Activated CD8-positive, alpha-beta memory T cell treated with anti-CD3 and anti-CD28 coated beads, Interleukin-2, amount 10 ng/mL, durations not matched to agents 7 days and 5 days (primary cell): ENCODE measurements at regions of chr6 and their contacts with region 1.

Region 1: GRCh38 chr6:138007014-138007472 is 100.2 kb downstream of the PERP start:
- DNase-seq: no peak
- ATAC-seq: peak; percentile 20
- H3K4me3 Mint-ChIP-seq: no peak overlapping the region
- H3K27ac Mint-ChIP-seq: no peak overlapping the region
- H3K4me1 Mint-ChIP-seq: peaks cover 7% of the 10 kb centered on the region
- H3K27me3 Mint-ChIP-seq: peaks cover 3% of the 10 kb centered on the region

Region 2: DNA sequence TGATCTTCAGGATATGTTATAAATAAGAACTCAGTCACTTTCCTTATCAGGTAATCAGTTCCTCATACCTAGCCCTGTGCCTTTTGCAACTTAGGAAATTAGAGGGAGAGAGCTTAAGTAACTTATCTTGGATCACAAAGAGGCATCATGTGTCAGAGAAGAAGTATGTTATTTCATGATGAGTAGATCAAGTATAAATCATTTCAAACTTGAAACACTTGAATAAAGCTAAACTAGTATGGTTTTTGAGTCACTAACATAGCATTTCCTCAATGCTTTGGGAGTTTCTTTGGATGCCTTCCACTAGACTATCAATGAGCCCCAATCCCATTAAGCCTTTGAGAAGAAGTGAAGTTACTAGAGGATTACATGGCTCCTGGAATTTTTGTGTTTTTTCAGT is 242.6 kb before region 1 on chr6:
- CTCF ChIA-PET with region 1: no interaction called
- DNase-seq: no peak
- ATAC-seq: no peak
- H3K4me3 Mint-ChIP-seq: no peak overlapping the region
- H3K27ac Mint-ChIP-seq: no peak overlapping the region
- H3K4me1 Mint-ChIP-seq: peaks cover 15% of the 10 kb centered on the region
- H3K27me3 Mint-ChIP-seq: no peaks in the 10 kb centered on the region

Region 3: GRCh38 chr6:137927777-137928218 is 79.2 kb before region 1 on chr6:
- CTCF ChIA-PET with region 1: no interaction called
- DNase-seq: peak; percentile 92
- ATAC-seq: peak; percentile 99
- H3K4me3 Mint-ChIP-seq: peak overlapping the region; percentile 55
- H3K27ac Mint-ChIP-seq: peak overlapping the region; percentile 87
- H3K4me1 Mint-ChIP-seq: peaks cover 41% of the 10 kb centered on the region
- H3K27me3 Mint-ChIP-seq: no peaks in the 10 kb centered on the region

Region 4: GRCh38 chr6:138034229-138034628 is 27.2 kb after region 1 on chr6:
- CTCF ChIA-PET with region 1: no interaction called
- DNase-seq: no peak
- ATAC-seq: no peak
- H3K4me3 Mint-ChIP-seq: no peak overlapping the region
- H3K27ac Mint-ChIP-seq: no peak overlapping the region
- H3K4me1 Mint-ChIP-seq: peaks cover 2% of the 10 kb centered on the region
- H3K27me3 Mint-ChIP-seq: no peaks in the 10 kb centered on the region

Region 5: DNA sequence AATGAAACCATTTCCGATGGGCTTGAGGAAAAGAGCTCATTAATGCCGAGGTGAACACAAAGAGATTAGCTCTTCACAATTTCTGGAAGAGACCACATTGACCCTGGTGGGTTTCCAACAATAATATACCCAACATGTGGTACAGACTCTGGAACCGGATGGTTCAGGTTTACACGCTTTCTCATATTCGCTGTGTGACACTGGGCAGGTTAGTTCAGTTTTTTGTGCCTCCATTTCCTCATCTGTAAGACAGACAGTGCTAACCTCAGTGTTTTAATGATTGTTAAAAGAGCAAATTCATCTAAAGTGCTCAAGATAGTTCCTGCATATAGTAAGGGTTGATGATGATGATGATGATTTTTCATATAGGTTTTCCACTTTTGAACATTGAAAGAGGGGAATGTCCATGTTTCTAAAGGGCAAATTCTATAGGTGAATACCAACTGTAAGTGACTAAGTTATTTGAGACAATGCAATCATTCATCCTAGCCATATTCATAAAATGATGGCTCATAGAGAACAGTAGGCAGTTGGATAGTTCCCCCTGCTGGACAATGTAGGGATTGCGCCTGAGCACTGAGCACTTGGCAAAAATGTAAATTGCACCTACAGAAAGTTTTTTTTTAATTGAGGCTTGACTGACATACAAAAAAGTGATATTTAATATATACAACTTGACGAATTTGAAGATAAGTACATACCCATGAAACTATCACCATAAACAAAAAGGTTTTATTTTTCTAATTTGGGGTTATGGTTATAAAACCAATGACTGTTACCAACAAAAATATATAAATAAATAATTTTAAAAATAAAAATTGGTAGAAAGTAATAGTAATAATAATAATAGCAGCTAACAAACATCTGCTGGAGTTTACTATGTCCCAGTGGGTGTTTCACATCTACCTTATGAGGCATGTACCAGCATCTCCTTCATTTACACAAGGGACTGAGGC is 102.3 kb after region 1 on chr6:
- CTCF ChIA-PET with region 1: interaction called, 79 read pairs
- DNase-seq: peak; percentile 87
- ATAC-seq: no peak
- H3K4me3 Mint-ChIP-seq: no peak overlapping the region
- H3K27ac Mint-ChIP-seq: no peak overlapping the region
- H3K4me1 Mint-ChIP-seq: peaks cover 28% of the 10 kb centered on the region
- H3K27me3 Mint-ChIP-seq: peaks cover 24% of the 10 kb centered on the region